ENCODE measurements at regions of chr3 and their contacts with region 1.

Region 1: DNA sequence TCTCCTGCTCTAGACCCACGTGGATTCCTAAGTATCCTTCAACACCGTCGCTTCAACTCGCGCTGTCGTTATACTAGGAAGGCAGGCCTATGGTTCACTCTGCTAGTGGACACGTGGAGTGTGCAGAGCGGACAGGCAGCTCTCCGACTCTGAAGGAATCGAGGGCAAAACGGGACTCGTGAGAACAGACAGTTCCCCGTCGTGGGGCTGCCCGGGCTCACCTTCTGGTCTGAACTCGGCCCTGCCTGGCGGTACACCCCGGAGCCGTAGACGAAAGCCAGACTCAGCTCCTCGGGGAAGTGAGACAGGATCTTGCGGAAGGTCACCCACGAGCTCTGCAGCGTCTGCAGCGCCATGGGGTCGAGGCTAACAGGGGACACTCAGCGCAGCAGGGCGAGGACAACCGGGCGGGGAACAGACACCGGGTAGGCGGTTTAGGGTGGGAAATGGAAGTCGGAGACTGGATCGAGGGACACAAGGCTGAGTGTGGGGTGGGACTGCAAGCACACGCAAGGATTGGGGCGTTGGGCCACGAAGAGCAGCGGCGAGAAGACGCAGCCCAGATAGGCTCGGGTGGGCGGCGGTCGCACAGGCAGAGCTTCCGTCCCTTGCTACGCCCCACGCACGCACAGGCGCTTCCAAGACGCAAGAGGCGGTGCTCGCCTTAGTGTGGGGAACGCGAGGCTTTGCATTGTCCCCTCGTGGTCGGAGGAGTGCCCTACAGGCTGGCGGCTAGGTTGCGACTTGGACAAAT is at the start of gene TAMM41:
- DNase-seq: peak; percentile 86
- H3K4me3 Mint-ChIP-seq: peak within 1 kb of the TSS; percentile 96
- H3K27ac Mint-ChIP-seq: peak within 1 kb of the TSS; percentile 93
- H3K4me1 Mint-ChIP-seq: peaks cover 26% of the 10 kb centered on the region
- H3K27me3 Mint-ChIP-seq: no peaks in the 10 kb centered on the region
- total RNA-seq, gene TAMM41: 35.2 and 38.0 TPM in 2 replicates

Region 2: GRCh38 chr3:11271986-11272904 is 574.2 kb before region 1 on chr3 and contains the start of gene ATG7:
- intact Hi-C with region 1: loop called (anchors 1 kb)
- DNase-seq: peak; percentile 96
- H3K4me3 Mint-ChIP-seq: peak within 1 kb of the TSS; percentile 90
- H3K27ac Mint-ChIP-seq: peak within 1 kb of the TSS; percentile 90
- H3K4me1 Mint-ChIP-seq: peaks cover 45% of the 10 kb centered on the region
- H3K27me3 Mint-ChIP-seq: peaks cover 3% of the 10 kb centered on the region
- total RNA-seq, gene ATG7: 38.6 and 44.0 TPM in 2 replicates

Region 3: DNA sequence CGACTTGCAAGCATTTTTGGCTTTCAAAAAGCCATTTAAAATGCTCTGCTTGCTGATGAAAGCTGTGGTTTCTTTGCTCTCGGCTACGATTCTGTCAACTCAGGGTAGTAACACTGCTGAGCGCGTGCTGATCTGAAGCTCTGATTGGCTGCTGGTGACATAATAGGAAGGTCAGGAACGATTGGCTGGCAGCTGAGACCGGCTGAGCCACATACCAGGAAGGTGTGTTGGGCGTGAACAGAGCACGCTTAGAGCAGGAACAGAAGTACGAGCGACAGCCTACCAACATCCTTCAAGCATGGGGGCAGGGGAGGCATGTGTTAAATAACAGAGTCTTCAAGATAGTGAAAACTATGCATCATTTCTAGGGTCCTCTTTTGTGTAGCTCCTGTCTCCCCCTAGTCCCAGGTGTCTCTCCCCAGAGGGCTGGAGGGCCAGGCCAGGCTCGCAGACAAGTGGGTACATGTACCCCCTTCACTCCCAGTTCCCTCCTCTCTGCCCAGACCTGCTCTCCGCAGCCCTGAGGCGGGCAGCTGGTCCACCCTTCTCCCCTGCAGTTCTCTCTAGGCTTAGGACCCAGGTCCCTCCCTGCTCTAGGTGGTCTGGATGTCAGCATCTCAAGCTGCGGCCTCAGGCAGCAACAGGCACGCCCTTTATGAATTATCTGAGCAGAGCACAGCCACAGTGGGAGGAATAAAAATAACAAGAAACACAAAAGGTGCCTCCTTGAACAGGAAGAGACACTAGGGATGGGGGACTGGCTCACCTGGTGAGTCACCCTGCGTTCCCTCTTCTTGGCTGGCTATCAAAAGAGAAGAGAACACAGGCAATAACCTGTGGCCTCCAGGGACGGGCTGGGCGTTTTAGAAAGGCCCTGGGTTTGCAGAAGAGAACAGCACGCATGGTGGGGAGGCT is 75.7 kb before region 1 on chr3:
- intact Hi-C with region 1: loop called (anchors 1 kb)
- DNase-seq: peak; percentile 82
- H3K4me3 Mint-ChIP-seq: peak overlapping the region; percentile 21
- H3K27ac Mint-ChIP-seq: peak overlapping the region; percentile 82
- H3K4me1 Mint-ChIP-seq: peaks cover 20% of the 10 kb centered on the region
- H3K27me3 Mint-ChIP-seq: no peaks in the 10 kb centered on the region

Region 4: DNA sequence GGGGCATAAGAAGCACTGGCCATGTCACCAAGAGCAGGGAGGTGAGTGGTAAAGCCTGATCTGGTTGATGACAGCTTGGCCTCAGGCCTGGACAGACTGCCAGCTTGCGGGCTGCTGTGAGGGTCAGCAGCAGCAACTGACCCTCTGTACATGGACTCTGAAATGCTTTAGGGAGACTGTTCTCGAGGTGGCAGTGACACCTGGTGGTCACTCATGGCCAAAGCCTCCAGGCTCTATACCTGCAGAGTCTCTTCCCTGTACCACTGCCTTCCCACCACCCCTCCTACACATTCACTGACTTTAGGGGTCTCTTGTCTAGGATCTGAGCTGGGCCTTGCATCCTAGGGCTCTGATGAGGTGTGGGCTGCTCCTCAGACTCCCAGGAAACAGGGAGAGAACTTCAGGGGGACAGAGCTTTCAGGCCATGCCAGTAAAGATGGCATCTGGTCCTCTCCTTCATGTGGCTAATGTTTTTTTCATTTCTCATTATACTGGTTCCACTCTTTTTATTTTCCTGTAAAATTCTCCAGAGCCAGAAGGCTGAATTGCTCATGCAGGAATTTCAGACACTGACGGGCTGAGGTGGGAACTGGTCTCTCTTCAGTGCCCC is 329.5 kb after region 1 on chr3:
- intact Hi-C with region 1: loop called (anchors 5 kb)
- DNase-seq: no peak
- H3K4me3 Mint-ChIP-seq: no peak overlapping the region
- H3K27ac Mint-ChIP-seq: no peak overlapping the region
- H3K4me1 Mint-ChIP-seq: peaks cover 48% of the 10 kb centered on the region
- H3K27me3 Mint-ChIP-seq: no peaks in the 10 kb centered on the region

Region 5: DNA sequence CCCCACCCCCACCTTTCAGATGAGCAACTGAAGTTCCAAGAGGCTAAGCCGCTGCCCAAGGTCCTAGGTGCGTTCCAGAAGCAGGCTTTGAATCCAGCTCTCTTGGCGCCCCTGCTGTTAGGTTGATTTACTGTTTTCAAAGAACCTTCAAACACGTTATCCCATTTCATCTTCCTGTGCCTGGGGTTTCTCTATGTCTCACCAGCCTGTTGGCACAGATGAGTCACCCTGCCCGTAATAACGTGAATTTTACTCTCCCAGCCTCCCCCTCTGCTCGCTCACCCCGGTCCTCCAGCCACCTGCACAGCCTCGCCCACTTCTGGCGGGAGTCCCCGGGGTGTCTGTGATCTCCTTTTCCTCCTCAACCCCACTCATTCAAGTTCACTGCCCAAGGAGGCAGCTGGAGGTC is 624.8 kb after region 1 on chr3:
- intact Hi-C with region 1: no loop called
- DNase-seq: peak; percentile 14
- H3K4me3 Mint-ChIP-seq: no peak overlapping the region
- H3K27ac Mint-ChIP-seq: no peak overlapping the region
- H3K4me1 Mint-ChIP-seq: peaks cover 11% of the 10 kb centered on the region
- H3K27me3 Mint-ChIP-seq: no peaks in the 10 kb centered on the region

Region 6: DNA sequence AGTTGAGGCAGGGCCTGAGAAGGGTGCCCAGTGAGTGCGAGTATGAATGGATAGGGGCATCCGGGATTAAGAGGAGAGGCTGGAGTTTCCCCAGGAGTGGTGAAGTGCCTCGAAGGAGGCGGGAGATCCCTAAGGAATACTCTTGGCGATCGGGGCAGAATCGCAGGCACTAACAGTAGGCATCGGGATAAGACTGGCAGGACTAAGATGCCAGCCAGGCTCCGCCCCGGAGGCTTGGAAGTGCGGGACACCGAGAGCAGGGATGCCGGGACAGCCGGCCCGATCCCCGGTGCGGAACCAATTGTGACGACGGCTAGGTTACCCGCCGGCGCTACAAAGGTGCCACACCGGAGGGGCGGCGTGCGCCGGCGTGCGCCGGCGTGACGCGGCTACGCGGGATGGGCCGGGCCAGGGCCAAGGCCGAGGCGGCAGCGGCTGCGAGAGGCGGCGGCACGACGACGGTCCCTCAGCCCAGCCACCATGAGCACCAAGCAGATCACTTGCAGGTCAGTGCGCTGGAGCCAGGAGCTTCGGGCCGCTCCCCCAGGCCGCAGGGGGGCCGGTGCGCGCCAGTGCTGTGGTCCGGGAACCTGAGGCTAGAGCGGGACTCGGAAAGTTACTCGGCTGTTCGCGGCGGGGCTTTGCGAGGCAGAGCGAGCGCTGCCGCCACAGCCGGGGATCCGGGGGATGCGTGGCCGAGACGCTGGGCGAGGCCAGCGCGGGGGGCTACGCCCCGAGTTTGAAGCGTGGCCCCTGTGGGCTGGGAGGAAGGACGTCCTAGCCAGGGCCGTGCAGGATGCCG is 710.4 kb after region 1 on chr3 and contains the start of gene MKRN2:
- intact Hi-C with region 1: loop called (anchors 2 kb)
- DNase-seq: peak; percentile 79
- H3K4me3 Mint-ChIP-seq: peak within 1 kb of the TSS; percentile 91
- H3K27ac Mint-ChIP-seq: peak within 1 kb of the TSS; percentile 88
- H3K4me1 Mint-ChIP-seq: peaks cover 67% of the 10 kb centered on the region
- H3K27me3 Mint-ChIP-seq: peaks cover 27% of the 10 kb centered on the region
- total RNA-seq, gene MKRN2: 28.5 and 28.6 TPM in 2 replicates

Measured in activated T-helper 1 cell treated with anti-CD3 and anti-CD28 coated beads, Interleukin-12 subunit alpha, Interleukin-12 subunit beta, Interleukin-2, Interleukin-4 antibody, amounts not matched to agents 30 ng/mL and 10 ng/mL and 1 ng/mL, durations not matched to agents 14 hours and 24 hours and 36 hours (primary cell).